Sciatic nerve (tissue), 2 donors: ENCODE measurements at regions of chr7 and their contacts with region 1.

Region 1: DNA sequence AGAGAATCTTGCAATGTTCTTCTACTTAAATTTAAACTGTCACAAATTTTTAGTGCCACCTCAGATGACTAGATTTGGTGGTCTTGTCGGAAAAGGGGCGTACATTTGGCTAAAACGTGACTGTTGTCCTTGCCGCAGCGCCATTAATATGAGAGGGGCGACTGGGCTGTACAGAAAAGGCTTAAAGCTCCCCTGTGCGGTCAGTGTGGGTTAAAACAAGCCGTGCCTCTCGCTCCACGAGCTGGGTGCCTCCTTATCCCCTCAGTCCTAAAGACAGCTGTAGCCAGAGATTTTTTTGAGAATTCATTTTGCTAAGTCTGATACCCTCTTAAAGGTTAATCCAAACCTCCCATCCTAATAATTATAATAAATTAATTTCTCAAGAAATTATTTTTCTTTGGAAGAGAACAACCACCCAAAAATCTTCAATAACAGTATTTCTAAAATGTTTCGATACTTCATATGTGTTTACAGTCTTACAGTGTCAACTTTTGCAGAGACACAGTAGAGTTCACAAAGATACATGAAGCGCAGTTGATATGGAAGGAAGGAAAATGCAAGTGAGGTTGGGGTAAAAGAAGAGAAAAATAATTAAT is 68.6 kb downstream of the C7orf25 start:
- DNase-seq: no peak
- ATAC-seq: peak; percentile 92

Region 2: GRCh38 chr7:41940760-41941343 is 902.5 kb before region 1 on chr7:
- intact Hi-C with region 1: loop called (anchors 10 kb)
- DNase-seq: peak; percentile 83
- ATAC-seq: peak; percentile 80

Region 3: DNA sequence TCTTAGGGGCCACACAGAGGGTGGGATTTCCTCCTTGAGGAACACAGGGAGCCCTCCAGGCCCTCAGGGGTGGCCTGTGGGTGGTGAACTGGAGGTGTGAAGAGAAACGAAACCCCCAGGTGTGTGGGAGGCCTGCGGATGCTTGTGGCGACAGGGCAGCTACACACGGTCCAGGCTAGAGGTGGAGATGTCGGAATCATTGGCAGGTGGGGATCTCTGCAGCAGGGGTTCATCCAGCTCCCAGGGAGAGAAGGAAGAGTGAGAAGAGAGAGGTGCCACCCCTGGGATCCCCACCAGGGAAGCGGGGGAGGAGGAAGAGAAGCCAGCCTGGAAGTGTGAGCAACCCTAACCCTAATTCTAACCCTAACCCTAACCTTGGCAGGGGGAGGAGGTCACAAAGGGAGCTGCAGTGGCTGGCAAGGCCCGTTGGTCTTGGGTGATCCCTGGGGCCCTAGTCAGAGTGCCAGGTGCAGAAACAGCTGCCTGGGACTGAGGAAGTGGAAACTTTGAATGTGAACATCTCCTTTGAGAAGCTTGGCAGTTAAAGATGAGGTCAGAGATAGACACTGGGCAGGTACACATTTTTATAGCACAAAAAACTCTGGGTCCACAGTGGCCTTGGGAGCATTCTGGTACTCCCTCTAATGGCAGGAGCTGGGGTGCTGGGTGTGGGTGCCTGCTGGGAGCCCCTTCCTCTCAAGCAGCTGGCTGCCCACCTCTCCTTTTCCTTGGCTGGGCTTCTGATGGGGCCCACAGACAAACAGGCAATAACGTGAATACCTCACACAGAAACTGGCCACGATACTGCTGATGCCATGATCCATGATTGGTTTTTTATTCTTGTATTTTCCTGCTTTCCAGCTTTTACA is 1254.0 kb after region 1 on chr7:
- intact Hi-C with region 1: no loop called
- DNase-seq: no peak
- ATAC-seq: no peak